PC-9 (cell line): ENCODE measurements at regions of chr21 and their contacts with region 1.

Region 1: DNA sequence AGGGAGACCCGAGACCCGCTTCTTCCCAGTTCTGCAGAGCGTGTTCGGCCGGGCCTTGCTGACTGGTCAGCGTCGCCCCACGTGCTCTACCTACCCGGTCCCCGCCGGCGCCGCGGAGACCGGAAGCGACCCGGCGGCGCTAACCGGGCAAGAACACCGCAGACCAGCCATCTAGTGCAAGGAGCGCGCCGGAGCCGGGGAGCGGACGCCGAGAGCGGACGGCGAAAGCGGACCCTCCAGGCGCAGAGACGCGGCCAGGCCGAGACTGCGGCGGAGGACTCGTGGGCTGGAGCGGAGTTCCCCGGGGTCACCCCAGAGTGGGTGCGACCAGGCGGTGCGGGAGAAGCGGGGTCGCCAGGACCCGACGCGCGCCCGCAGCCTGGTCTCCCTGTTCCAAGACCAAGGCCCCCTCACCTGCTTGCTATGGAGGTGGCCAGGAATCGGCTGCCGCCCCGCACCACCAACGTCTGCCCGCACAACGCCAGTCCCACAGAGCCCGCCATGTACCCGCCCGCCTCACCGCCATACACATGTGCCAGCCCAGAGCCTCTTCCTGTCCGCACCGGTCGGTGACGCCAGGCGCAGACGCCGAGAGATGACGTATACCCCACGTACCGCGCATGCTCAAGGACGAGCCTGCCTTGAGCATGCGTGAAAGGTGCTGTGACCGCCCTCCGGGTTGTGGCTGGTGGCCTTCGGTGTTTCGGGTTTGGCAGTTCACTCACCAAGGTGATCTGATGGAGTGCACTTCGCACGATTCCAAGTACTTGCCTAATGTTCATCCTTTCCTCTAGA is at the start of gene WDR4:
- DNase-seq: peak; percentile 91 to 94
- H3K4me3 ChIP-seq: peak within 1 kb of the TSS; percentile 61
- H3K27ac ChIP-seq: peak within 1 kb of the TSS; percentile 75
- H3K4me1 ChIP-seq: peaks cover 6% of the 10 kb centered on the region; the same call in 1 of the 2 replicates
- H3K27me3 ChIP-seq: no peaks in the 10 kb centered on the region
- CTCF ChIP-seq: no peak
- total RNA-seq, gene WDR4: 17.6 and 18.7 TPM in 2 replicates

Region 2: DNA sequence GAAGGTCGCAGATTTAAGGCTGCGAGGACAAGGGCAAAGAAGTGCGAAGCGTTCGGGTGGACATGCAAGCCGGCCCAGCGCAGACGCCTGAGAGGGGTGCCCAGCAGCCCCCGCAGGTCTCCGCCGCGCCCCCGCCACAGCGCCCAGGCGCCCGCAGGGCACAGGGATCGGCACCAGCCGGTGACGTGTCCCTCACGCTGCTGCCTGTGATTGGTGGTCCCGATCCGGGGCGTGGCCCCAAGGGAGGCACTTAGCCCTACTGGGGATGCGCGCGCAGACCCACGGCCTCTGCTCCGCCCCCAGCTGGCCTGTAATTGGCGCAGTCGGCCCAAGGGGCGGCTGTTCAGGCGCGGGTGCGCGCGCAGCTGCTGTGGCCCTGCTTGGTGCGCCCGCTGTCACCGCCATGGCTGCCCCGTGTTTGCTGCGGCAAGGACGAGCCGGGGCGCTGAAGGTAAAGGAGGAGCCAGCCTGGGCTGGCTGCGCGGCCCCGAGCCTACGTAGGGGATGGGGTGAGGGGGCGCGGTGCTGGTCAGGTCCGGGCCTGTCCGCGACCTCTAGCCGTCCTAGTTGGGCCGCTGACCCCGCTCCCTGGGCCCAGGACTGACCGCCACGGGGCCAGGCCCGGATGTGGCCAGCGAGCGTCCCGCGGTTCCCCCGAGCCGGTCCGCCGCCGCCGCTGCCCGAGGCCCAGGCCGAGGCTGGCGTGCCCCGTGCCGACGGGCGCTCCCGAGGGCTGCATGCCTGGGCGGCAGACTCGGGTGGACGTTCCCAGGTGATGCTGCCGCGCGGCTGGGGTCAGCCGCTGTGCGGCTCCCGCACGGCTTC is 14.0 kb after region 1 on chr21 and contains the start of gene NDUFV3:
- CTCF ChIA-PET with region 1: no interaction called
- POLR2A ChIA-PET with region 1: interaction called, 9 read pairs
- intact Hi-C with region 1: loop called (anchors 2 kb)
- DNase-seq: peak; percentile 90 to 96
- H3K4me3 ChIP-seq: peak within 1 kb of the TSS; percentile 99
- H3K27ac ChIP-seq: peak within 1 kb of the TSS; percentile 89
- H3K4me1 ChIP-seq: no peaks in the 10 kb centered on the region
- H3K27me3 ChIP-seq: no peaks in the 10 kb centered on the region
- CTCF ChIP-seq: no peak
- total RNA-seq, gene NDUFV3: 19.4 and 20.7 TPM in 2 replicates

Region 3: DNA sequence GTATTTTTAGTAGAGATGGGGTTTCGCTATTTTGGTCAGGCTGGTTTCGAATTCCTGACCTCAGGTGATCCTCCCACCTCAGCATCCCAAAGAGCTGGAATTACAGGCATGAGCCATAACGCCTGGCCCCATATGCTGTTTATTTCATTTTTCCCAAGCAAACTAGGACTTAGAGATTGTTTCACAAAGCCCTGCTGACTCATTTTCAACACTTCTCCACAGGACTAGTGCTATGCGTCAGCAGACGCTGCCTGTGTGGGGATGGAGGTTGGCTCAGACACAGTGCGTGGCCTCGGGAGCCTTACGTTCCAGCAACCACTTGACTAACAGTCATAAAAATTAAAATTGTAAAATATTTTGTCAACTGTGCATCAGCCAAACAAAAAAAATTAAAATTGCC is 117.9 kb after region 1 on chr21:
- CTCF ChIA-PET with region 1: no interaction called
- POLR2A ChIA-PET with region 1: interaction called, 21 read pairs
- intact Hi-C with region 1: no loop called
- DNase-seq: peak in 1 of 2 experiments; percentile 21
- H3K4me3 ChIP-seq: no peak overlapping the region
- H3K27ac ChIP-seq: no peak overlapping the region
- H3K4me1 ChIP-seq: no peaks in the 10 kb centered on the region
- H3K27me3 ChIP-seq: no peaks in the 10 kb centered on the region
- CTCF ChIP-seq: no peak